ENCODE measurements at regions of chr6 and their contacts with region 1.

Region 1: GRCh38 chr6:69796642-69797390 is at the start of gene LMBRD1:
- DNase-seq: peak; percentile 98 to 100 (median 99)
- ATAC-seq: peak; percentile 80
- H3K4me3 ChIP-seq: peak within 1 kb of the TSS; percentile 68
- H3K4me3 Mint-ChIP-seq: peak within 1 kb of the TSS; percentile 91
- H3K27ac ChIP-seq: peak within 1 kb of the TSS; percentile 92
- H3K27ac Mint-ChIP-seq: peak within 1 kb of the TSS; percentile 91
- H3K4me1 ChIP-seq: peaks cover 17% of the 10 kb centered on the region
- H3K4me1 Mint-ChIP-seq: peaks cover 57% of the 10 kb centered on the region
- H3K27me3 ChIP-seq: no peaks in the 10 kb centered on the region
- H3K27me3 Mint-ChIP-seq: no peaks in the 10 kb centered on the region
- CTCF ChIP-seq: peak; percentile 94
- total RNA-seq, gene LMBRD1: 40.3 to 42.0 TPM

Region 2: GRCh38 chr6:69784595-69785377 is 12.0 kb before region 1 on chr6:
- CTCF ChIA-PET with region 1: interaction called, 17 read pairs
- POLR2A ChIA-PET with region 1: interaction called, 3 read pairs
- intact Hi-C with region 1: no loop called
- DNase-seq: no peak
- ATAC-seq: peak; percentile 51
- H3K4me3 ChIP-seq: no peak overlapping the region
- H3K4me3 Mint-ChIP-seq: no peak overlapping the region
- H3K27ac ChIP-seq: no peak overlapping the region
- H3K27ac Mint-ChIP-seq: no peak overlapping the region
- H3K4me1 ChIP-seq: peaks cover 3% of the 10 kb centered on the region
- H3K4me1 Mint-ChIP-seq: peaks cover 65% of the 10 kb centered on the region
- H3K27me3 ChIP-seq: no peaks in the 10 kb centered on the region
- H3K27me3 Mint-ChIP-seq: no peaks in the 10 kb centered on the region
- CTCF ChIP-seq: no peak

Region 3: DNA sequence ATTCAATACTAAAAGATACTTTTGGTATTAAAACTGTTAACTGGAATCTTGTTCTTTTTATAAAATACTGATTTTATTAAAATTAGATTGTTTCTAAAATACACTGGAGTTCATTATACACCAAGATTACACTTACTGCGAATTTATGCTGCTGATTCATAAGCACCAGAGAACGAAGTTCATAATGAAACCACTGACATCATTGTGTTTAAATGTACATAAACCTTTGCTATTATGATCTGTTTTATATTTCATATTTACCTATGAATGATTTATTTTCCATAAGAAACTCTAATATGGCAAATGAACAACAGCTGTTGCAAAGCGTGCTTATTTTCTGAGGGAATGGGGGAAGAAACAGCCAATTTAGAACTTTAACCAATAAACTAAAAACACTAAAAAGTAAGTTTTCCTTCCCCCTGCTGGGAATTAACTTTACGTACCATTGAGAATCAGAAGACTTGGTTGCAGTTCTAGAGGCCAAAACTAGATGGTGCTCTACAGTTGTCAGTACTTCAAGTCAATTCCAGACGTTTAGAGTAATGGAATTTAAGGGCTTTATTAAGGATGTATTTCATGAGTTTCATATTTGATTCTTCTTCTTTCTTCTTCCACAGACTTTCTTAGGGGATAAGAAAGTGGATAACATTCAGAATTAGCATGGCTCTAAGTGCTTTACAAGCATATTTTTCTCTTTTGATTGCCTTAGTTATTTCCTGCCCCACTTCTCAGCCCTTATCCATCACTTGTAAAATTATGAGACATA is 38.8 kb after region 1 on chr6:
- CTCF ChIA-PET with region 1: interaction called, 4 read pairs
- POLR2A ChIA-PET with region 1: interaction called, 3 read pairs
- intact Hi-C with region 1: loop called in 1 of 2 experiments (anchors 5 kb)
- DNase-seq: peak in 4 of 14 experiments; percentile 24 to 67 (median 57)
- ATAC-seq: peak; percentile 77
- H3K4me3 ChIP-seq: no peak overlapping the region
- H3K4me3 Mint-ChIP-seq: no peak overlapping the region
- H3K27ac ChIP-seq: no peak overlapping the region
- H3K27ac Mint-ChIP-seq: no peak overlapping the region
- H3K4me1 ChIP-seq: no peaks in the 10 kb centered on the region
- H3K4me1 Mint-ChIP-seq: peaks cover 7% of the 10 kb centered on the region
- H3K27me3 ChIP-seq: peaks cover 4 to 11% of the 10 kb centered on the region in 2 experiments
- H3K27me3 Mint-ChIP-seq: peaks cover 29% of the 10 kb centered on the region
- CTCF ChIP-seq: peak; percentile 88

Region 4: DNA sequence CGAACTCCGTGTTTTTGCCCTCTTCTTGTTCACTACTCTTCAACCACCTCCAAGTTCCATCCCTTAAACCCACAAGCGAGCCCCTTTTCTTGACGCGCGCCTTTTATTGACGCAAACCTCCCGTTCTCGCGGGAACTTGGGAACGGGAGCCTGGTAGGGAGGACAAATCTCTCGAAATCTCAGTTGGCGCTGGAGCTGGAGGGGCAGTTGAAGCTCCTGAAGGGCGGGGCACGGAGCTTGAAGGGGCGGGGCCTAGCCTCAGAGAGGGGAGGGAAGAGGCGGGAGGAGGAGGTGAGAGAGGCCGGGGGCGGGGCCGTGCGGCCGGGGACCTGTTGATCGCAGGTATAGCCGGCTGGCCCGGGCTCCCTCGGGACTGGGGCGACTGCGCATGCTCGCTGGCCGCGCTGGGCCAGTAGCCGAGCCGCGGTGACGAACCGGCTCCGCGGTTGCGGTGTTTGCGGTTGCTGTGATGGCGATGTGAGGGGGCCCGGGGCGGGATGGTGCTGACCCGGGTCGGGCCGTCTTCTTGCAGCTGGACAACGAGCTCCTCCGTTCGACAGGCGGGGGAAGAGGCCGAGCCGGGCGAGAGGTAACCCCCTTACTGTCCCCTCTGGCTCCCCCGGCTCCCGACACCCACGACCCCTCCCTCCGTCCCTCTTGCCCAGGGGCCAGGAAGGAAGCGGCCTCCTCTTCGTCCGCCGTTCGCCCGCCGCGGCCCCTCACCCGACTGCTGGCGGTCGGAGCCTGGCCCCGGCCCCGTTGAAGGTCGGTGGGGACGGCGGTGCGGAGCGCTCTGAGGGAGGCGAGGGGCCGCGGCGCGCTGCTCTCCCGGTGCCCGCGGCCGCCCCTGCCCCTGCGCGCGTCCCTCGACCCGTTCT is 616.5 kb after region 1 on chr6 and contains the start of gene FAM135A:
- CTCF ChIA-PET with region 1: no interaction called
- POLR2A ChIA-PET with region 1: interaction called, 5 read pairs
- intact Hi-C with region 1: loop called (anchors 10 kb)
- DNase-seq: peak; percentile 88 to 98 (median 91)
- ATAC-seq: peak; percentile 92
- H3K4me3 ChIP-seq: peak within 1 kb of the TSS; percentile 65
- H3K4me3 Mint-ChIP-seq: peak within 1 kb of the TSS; percentile 98
- H3K27ac ChIP-seq: peak within 1 kb of the TSS; percentile 13 to 31
- H3K27ac Mint-ChIP-seq: peak within 1 kb of the TSS; percentile 91
- H3K4me1 ChIP-seq: peaks cover 10% of the 10 kb centered on the region
- H3K4me1 Mint-ChIP-seq: peaks cover 23% of the 10 kb centered on the region
- H3K27me3 ChIP-seq: no peaks in the 10 kb centered on the region
- H3K27me3 Mint-ChIP-seq: no peaks in the 10 kb centered on the region
- CTCF ChIP-seq: no peak
- total RNA-seq, gene FAM135A: 5.6 to 6.6 TPM

Region 5: DNA sequence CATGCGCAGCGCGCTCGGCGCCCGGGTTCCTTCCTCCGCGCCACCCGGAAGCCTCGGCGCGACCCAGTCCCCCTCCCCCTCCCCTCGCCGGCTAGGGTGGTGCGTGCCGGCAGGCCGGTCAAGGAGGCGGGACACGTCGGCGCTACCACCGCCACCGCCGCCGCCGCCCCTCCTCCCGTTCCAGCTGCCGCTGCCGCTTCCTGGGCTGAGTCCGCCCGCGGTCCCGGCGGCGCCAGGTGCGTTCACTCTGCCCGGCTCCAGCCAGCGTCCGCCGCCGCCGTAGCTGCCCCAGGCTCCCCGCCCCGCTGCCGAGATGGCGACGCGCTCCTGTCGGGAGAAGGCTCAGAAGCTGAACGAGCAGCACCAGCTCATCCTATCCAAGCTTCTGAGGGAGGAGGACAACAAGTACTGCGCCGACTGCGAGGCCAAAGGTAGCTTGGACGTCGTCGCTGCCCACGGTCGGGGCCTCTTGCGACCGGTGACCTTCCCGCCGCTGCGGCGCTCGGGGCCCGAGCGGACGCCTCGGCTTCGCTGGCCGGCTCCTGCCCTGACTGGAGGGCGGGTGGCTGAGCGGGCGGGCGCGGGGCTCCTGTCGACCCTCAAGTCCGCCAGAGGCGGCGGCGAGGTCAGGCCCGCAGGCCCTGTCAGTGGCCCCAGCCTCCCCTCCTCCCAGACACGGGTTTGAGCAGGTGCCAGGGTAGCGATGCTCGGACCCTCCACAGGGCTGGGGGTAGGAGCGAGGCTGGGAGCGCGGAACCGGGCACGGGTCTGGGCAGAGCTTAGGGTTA is 871.1 kb after region 1 on chr6 and contains the start of gene SMAP1:
- CTCF ChIA-PET with region 1: no interaction called
- POLR2A ChIA-PET with region 1: interaction called, 3 read pairs
- intact Hi-C with region 1: loop called in 1 of 2 experiments (anchors 10 kb)
- DNase-seq: peak; percentile 80 to 96 (median 92)
- ATAC-seq: peak; percentile 87
- H3K4me3 ChIP-seq: peak within 1 kb of the TSS; percentile 75
- H3K4me3 Mint-ChIP-seq: peak within 1 kb of the TSS; percentile 90
- H3K27ac ChIP-seq: peak within 1 kb of the TSS; percentile 54 to 66
- H3K27ac Mint-ChIP-seq: peak within 1 kb of the TSS; percentile 88
- H3K4me1 ChIP-seq: peaks cover 26% of the 10 kb centered on the region
- H3K4me1 Mint-ChIP-seq: peaks cover 57% of the 10 kb centered on the region
- H3K27me3 ChIP-seq: no peaks in the 10 kb centered on the region
- H3K27me3 Mint-ChIP-seq: no peaks in the 10 kb centered on the region
- CTCF ChIP-seq: no peak
- total RNA-seq, gene SMAP1: 20.0 to 22.5 TPM

Measured in CD4-positive, alpha-beta T cell (primary cell).